MCF 10A (cell line): ENCODE measurements at regions of chr15 and their contacts with region 1.

Region 1: DNA sequence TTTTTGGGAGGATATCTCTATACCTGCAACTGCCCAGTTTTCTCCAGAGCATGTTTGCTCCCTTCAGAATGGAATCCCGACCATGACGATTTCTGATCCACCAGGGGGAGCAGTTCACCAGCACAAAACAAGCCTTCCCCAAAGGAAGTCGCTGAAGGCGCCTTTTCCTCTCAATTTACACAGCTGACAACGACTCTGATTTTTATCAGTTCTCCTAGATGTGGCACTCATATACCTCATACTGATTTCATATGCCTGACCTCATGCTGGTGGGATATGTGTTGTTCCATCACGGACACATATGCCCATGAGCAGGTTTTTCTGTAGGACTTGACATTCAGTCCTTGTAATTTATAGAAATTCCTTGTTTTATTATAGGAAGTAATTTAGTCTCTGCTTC is 1028.2 kb downstream of the MCTP2 start:
- DNase-seq: peak; percentile 77
- H3K4me3 Mint-ChIP-seq: no peak overlapping the region
- H3K27ac Mint-ChIP-seq: no peak overlapping the region
- H3K4me1 Mint-ChIP-seq: no peaks in the 10 kb centered on the region
- H3K27me3 Mint-ChIP-seq: no peaks in the 10 kb centered on the region
- CTCF ChIP-seq: peak; percentile 63

Region 2: GRCh38 chr15:94670438-94671034 is 589.0 kb before region 1 on chr15:
- CTCF ChIA-PET with region 1: interaction called, 20 read pairs
- POLR2A ChIA-PET with region 1: no interaction called
- intact Hi-C with region 1: loop called (anchors 1 kb)
- DNase-seq: peak; percentile 64
- H3K4me3 Mint-ChIP-seq: no peak overlapping the region
- H3K27ac Mint-ChIP-seq: no peak overlapping the region
- H3K4me1 Mint-ChIP-seq: peaks cover 13% of the 10 kb centered on the region
- H3K27me3 Mint-ChIP-seq: no peaks in the 10 kb centered on the region
- CTCF ChIP-seq: peak; percentile 66

Region 3: DNA sequence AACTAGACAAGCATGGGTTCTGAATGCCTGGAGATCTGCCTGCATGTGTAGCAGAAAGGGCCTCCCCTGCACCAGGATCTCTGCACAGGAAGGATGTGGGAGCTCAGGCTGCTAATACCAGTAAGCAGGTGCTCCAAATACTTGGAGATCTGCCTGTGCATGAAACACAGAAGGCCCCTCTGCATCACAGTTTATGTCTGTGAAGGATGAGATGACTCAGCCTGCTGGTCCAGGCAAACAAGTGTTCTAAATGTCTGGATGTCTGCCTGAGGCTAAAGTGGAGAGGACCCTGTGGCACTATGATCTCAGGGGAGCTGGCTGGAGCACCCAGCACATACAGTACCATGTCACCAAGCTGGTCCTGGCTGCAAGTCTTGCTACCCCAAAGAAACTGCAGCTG is 349.3 kb before region 1 on chr15:
- CTCF ChIA-PET with region 1: no interaction called
- POLR2A ChIA-PET with region 1: no interaction called
- intact Hi-C with region 1: no loop called
- DNase-seq: peak; percentile 24
- H3K4me3 Mint-ChIP-seq: no peak overlapping the region
- H3K27ac Mint-ChIP-seq: no peak overlapping the region
- H3K4me1 Mint-ChIP-seq: no peaks in the 10 kb centered on the region
- H3K27me3 Mint-ChIP-seq: no peaks in the 10 kb centered on the region
- CTCF ChIP-seq: no peak

Region 4: DNA sequence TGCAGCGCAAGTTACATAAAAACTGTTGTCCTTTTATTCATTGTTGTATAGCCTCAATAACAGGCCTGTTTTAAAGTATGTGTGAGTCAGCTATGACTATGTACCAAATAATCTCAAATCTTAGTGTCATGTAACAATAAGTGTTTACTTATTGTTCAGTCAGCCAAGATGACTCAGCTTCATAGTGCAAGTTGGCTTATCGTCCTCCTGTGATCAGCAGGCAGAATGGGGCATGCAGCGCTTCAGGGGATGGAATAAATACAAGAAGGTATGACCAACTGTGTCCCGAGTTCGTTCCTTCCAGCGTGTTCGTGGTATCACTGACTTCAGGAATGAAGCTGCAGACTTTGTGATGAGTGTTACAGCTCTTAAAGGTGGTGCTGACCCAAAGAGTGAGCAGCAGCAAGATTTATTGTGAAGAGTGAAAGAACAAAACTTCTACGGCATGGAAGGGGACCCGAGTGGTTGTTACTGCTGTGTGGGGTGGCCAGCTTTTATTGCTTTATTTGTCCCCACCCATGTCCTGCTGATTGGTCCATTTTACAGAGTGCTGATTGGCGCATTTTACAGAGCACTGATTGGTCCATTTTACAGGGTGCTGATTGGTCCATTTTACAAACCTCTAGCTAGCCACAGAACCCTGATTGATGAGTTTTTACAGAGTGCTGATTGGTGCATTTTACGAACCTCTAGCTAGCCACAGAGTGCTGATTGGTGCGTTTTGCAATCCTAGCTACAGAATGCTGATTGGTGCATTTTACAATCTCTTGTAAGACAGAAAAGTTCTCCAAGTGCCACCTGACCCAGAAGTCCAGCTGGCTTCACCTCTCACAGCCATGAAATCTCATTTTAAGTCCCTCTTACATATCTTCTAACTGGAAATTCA is 12.2 kb before region 1 on chr15:
- CTCF ChIA-PET with region 1: interaction called, 19 read pairs
- POLR2A ChIA-PET with region 1: interaction called, 5 read pairs
- intact Hi-C with region 1: no loop called
- DNase-seq: peak; percentile 97
- H3K4me3 Mint-ChIP-seq: peak overlapping the region; percentile 48
- H3K27ac Mint-ChIP-seq: peak overlapping the region; percentile 19
- H3K4me1 Mint-ChIP-seq: peaks cover 10% of the 10 kb centered on the region
- H3K27me3 Mint-ChIP-seq: no peaks in the 10 kb centered on the region
- CTCF ChIP-seq: no peak

Region 5: DNA sequence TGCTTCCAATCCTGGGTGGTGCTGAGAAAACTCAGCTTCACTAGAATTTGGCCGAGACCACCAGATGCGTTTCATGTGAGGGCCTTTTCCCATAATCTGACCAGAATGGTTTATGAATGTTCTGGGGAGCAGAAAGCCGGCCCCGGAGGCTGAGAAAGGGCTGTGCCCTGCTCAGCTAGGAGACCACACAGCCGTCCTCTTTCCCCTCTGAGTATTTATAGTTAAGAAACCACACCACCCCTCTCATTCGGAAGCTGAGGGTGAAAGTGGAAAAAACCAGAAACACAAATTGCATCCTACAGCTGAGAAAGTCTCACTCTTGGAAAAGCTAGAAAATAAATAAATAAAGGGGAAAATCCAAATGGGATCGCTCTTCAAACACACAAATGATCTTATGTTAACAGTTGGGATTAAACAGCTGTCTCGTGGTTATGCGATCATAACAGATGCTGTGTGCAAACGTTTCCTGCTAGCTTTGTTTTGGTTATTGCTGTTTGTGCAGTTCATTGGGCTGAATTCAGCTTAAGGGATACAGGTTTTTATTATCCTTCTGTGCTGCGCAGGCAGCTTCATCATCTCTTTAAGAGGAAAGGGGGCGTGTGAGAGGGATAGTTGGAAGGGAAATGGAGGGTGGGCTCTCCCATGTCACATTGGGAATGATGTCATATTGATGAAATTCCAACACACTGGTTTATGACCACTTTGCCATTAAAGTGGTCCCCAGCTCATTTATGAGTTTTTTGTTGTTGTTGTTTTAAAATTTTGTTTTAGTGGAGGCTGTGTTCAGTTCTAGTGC is 44.8 kb after region 1 on chr15:
- CTCF ChIA-PET with region 1: no interaction called
- POLR2A ChIA-PET with region 1: no interaction called
- intact Hi-C with region 1: no loop called
- DNase-seq: no peak
- H3K4me3 Mint-ChIP-seq: no peak overlapping the region
- H3K27ac Mint-ChIP-seq: no peak overlapping the region
- H3K4me1 Mint-ChIP-seq: no peaks in the 10 kb centered on the region
- H3K27me3 Mint-ChIP-seq: no peaks in the 10 kb centered on the region
- CTCF ChIP-seq: no peak

Region 6: GRCh38 chr15:96336642-96337364 is 1077.3 kb after region 1 on chr15:
- CTCF ChIA-PET with region 1: interaction called, 11 read pairs
- POLR2A ChIA-PET with region 1: no interaction called
- intact Hi-C with region 1: no loop called
- DNase-seq: peak; percentile 55
- H3K4me3 Mint-ChIP-seq: peak overlapping the region; percentile 84
- H3K27ac Mint-ChIP-seq: peak overlapping the region; percentile 98
- H3K4me1 Mint-ChIP-seq: peaks cover 30% of the 10 kb centered on the region
- H3K27me3 Mint-ChIP-seq: no peaks in the 10 kb centered on the region
- CTCF ChIP-seq: no peak

Region 7: DNA sequence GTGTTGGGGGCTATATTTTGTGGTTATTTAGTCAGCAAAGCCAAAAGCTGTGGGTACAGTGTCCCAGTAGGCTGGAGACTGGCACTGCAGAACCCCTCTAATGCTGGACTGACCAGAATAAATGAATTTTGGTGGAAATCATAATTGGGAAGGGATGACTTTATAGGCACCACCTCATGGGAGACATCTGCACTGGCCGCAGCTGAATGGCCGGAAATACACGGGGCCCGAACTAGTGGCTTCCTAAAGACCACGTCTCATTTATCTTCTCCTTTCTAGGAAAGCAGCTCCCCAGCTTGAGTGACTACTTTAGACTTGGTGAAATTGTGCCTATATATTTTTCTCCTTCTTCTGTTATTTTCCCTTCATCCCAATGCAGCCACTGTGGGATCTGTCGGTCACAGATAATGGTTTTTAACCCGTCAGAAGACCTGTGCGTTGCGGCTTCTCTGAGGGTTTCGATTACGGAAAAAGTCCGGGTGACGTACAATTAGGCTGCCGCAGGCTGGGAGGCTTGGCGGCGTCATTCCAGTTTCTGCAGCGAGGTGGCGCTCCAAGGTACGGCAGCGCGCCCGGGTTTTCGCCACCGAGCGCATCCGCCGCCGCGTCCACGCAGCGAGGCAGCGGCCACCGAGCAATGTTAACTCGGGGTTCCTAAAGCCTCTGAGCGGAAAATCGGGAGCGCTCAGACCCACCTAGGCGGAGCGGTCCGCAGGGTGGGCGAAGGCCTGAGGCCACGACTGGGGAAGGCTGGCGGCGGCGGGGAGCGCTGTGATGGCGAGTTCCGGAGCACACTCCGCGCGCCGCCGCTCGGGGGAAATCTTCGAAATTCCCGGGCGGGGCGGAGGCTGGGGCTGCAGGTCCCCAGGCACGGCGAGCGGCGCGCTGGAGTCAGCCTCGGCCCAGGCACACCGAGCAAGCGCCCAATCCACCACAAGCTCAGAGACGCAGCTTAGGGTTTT is 1097.3 kb after region 1 on chr15:
- CTCF ChIA-PET with region 1: interaction called, 13 read pairs
- POLR2A ChIA-PET with region 1: no interaction called
- intact Hi-C with region 1: no loop called
- DNase-seq: peak; percentile 75
- H3K4me3 Mint-ChIP-seq: peak overlapping the region; percentile 73
- H3K27ac Mint-ChIP-seq: no peak overlapping the region
- H3K4me1 Mint-ChIP-seq: peaks cover 5% of the 10 kb centered on the region
- H3K27me3 Mint-ChIP-seq: no peaks in the 10 kb centered on the region
- CTCF ChIP-seq: peak; percentile 95

Region 8: GRCh38 chr15:97234851-97235610 is 1975.5 kb after region 1 on chr15:
- CTCF ChIA-PET with region 1: interaction called, 17 read pairs
- POLR2A ChIA-PET with region 1: no interaction called
- intact Hi-C with region 1: loop called (anchors 1 kb)
- DNase-seq: peak; percentile 61
- H3K4me3 Mint-ChIP-seq: no peak overlapping the region
- H3K27ac Mint-ChIP-seq: no peak overlapping the region
- H3K4me1 Mint-ChIP-seq: peaks cover 17% of the 10 kb centered on the region
- H3K27me3 Mint-ChIP-seq: peaks cover 70% of the 10 kb centered on the region
- CTCF ChIP-seq: peak; percentile 79